Naive thymus-derived CD4-positive, alpha-beta T cell (primary cell): ENCODE measurements at regions of chr9 and their contacts with region 1.

Region 1: GRCh38 chr9:94783102-94783664 is 56.7 kb downstream of the AOPEP start:
- DNase-seq: peak in 6 of 9 donors; percentile 10 to 31 (median 20)
- ATAC-seq: peak; percentile 61
- H3K4me3 ChIP-seq: no peak overlapping the region
- H3K4me3 Mint-ChIP-seq: no peak overlapping the region
- H3K27ac ChIP-seq: no peak overlapping the region
- H3K27ac Mint-ChIP-seq: no peak overlapping the region
- H3K4me1 ChIP-seq: no peaks in the 10 kb centered on the region
- H3K4me1 Mint-ChIP-seq: peaks cover 0 to 14% (median 6%) of the 10 kb centered on the region in 7 donors
- H3K27me3 ChIP-seq: no peaks in the 10 kb centered on the region
- H3K27me3 Mint-ChIP-seq: no peaks in the 10 kb centered on the region

Region 2: DNA sequence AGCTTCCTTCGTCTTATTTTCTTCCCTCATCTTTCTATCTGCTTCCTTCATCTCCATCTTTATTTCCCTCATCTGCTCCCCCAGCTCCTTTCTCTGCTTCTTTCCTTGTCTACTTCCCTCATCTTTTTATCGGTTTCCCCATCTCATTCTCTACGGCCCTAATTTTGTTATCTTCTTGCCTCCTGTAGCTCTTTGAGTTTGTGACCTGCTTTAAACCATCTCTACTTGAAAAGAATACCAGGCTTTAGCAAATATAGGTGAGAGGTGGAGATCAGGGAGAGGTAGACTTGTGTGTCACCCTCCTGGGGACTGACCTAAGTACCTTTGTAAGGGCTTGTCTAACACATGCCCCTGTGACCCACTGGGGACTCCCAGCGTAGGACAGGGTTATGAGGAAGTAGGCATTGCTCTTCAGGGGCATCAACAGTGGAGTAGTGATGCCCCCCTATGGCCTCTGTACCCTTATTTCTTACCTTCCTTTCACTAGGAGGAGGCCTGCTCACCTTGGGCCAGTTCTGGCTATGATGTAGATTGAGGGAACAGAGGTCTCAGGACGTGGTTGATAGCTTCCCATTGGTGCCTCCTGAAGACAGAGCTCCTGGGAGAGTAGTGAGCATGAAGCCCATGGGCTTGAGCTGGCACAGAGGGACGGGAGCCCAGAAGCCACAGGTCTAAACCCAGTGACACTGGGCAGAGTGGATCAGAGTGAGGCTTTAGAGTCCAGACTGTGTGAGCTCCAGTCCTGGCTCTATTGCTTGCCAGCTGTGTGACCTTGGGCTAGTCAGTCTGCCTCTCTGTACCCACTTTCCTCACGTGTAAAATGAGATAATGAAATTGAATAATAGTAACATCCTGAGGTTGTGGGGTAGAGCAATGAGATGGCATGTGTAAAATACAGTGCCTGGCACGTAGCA is 134.9 kb after region 1 on chr9:
- CTCF ChIA-PET with region 1: no interaction called
- POLR2A ChIA-PET with region 1: no interaction called
- intact Hi-C with region 1: loop called in 1 of 2 experiments (anchors 1 kb)
- DNase-seq: peak in 4 of 9 donors; percentile 13 to 31 (median 20)
- ATAC-seq: peak; percentile 74
- H3K4me3 ChIP-seq: no peak overlapping the region
- H3K4me3 Mint-ChIP-seq: no peak overlapping the region
- H3K27ac ChIP-seq: no peak overlapping the region
- H3K27ac Mint-ChIP-seq: peak overlapping the region in 2 of 9 donors; percentile 36
- H3K4me1 ChIP-seq: no peaks in the 10 kb centered on the region
- H3K4me1 Mint-ChIP-seq: peaks cover 0 to 5% (median 0%) of the 10 kb centered on the region in 7 donors
- H3K27me3 ChIP-seq: no peaks in the 10 kb centered on the region
- H3K27me3 Mint-ChIP-seq: no peaks in the 10 kb centered on the region

Region 3: GRCh38 chr9:95268681-95269080 is 485.5 kb after region 1 on chr9:
- CTCF ChIA-PET with region 1: no interaction called
- POLR2A ChIA-PET with region 1: no interaction called
- intact Hi-C with region 1: loop called in 1 of 2 experiments (anchors 1 kb)
- DNase-seq: no peak
- ATAC-seq: no peak
- H3K4me3 ChIP-seq: no peak overlapping the region
- H3K4me3 Mint-ChIP-seq: no peak overlapping the region
- H3K27ac ChIP-seq: no peak overlapping the region
- H3K27ac Mint-ChIP-seq: peak overlapping the region in 2 of 9 donors; percentile 12 to 32
- H3K4me1 ChIP-seq: peaks cover 0 to 4% of the 10 kb centered on the region in 2 donors
- H3K4me1 Mint-ChIP-seq: peaks cover 9 to 49% (median 27%) of the 10 kb centered on the region in 7 donors
- H3K27me3 ChIP-seq: no peaks in the 10 kb centered on the region
- H3K27me3 Mint-ChIP-seq: no peaks in the 10 kb centered on the region

Region 4: DNA sequence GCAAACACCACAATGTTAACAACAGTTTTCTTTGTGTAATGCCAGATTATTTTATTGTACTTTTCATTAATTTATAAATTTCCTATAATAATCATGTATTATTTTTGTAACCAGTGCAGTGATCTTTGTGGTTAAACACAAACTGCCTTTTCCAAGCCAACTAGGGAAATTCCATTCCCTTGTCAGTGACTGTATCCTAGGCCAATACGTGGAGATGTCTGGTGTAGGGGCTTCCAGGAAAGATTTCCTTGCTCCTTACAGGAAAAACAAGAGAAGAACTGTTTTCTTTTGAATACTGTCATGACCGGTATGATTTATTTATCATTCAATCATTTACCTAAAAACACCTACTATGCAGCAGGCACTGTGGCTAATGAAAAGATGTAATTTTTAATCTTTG is 503.0 kb after region 1 on chr9:
- CTCF ChIA-PET with region 1: no interaction called
- POLR2A ChIA-PET with region 1: no interaction called
- intact Hi-C with region 1: no loop called
- DNase-seq: no peak
- ATAC-seq: no peak
- H3K4me3 ChIP-seq: no peak overlapping the region
- H3K4me3 Mint-ChIP-seq: no peak overlapping the region
- H3K27ac ChIP-seq: no peak overlapping the region
- H3K27ac Mint-ChIP-seq: no peak overlapping the region
- H3K4me1 ChIP-seq: peaks cover 0 to 4% of the 10 kb centered on the region in 2 donors
- H3K4me1 Mint-ChIP-seq: peaks cover 3 to 10% (median 8%) of the 10 kb centered on the region in 7 donors
- H3K27me3 ChIP-seq: no peaks in the 10 kb centered on the region
- H3K27me3 Mint-ChIP-seq: peaks cover 0 to 6% (median 0%) of the 10 kb centered on the region in 5 donors